MCF 10A (cell line): ENCODE measurements at regions of chr22 and their contacts with region 1.

Region 1: DNA sequence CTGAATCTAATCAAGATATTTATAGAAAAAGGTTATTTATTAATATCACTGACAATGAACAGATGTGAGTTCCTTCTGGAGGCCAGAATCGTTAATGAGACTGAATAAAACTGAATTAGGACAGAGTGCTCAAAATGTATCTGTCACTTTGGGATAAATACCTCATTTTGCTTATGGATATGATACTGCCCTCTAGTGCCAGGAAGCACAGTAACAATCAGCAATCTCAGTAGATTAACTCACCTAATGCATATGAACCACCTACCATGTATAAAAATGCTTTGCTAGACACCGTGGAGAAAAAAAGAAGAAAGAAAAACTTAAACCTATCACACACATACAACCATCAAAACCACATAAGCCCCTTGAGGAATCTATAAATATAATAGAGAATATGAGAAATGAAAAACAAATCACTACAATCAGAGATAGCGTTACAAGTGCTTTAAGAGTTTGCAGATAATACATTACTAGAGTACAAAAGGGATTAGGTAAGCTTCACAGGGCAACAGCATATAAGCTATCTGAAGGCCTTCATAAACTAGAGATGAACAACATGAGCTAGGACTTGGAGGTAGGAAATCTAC is 117.4 kb downstream of the SGSM3 start:
- DNase-seq: peak; percentile 54
- H3K4me3 Mint-ChIP-seq: no peak overlapping the region
- H3K27ac Mint-ChIP-seq: peak overlapping the region; percentile 94
- H3K4me1 Mint-ChIP-seq: peaks cover 39% of the 10 kb centered on the region
- H3K27me3 Mint-ChIP-seq: no peaks in the 10 kb centered on the region
- CTCF ChIP-seq: peak; percentile 55

Region 2: GRCh38 chr22:40326905-40327735 is 160.6 kb before region 1 on chr22:
- CTCF ChIA-PET with region 1: no interaction called
- POLR2A ChIA-PET with region 1: no interaction called
- intact Hi-C with region 1: no loop called
- DNase-seq: no peak
- H3K4me3 Mint-ChIP-seq: no peak overlapping the region
- H3K27ac Mint-ChIP-seq: no peak overlapping the region
- H3K4me1 Mint-ChIP-seq: no peaks in the 10 kb centered on the region
- H3K27me3 Mint-ChIP-seq: no peaks in the 10 kb centered on the region
- CTCF ChIP-seq: no peak

Region 3: GRCh38 chr22:40443732-40444131 is 44.0 kb before region 1 on chr22:
- CTCF ChIA-PET with region 1: interaction called, 32 read pairs
- POLR2A ChIA-PET with region 1: interaction called, 48 read pairs
- intact Hi-C with region 1: no loop called
- DNase-seq: no peak
- H3K4me3 Mint-ChIP-seq: no peak overlapping the region
- H3K27ac Mint-ChIP-seq: peak overlapping the region; percentile 23
- H3K4me1 Mint-ChIP-seq: peaks cover 21% of the 10 kb centered on the region
- H3K27me3 Mint-ChIP-seq: no peaks in the 10 kb centered on the region
- CTCF ChIP-seq: no peak

Region 4: GRCh38 chr22:40449676-40450035 is 38.1 kb before region 1 on chr22:
- CTCF ChIA-PET with region 1: interaction called, 23 read pairs
- POLR2A ChIA-PET with region 1: interaction called, 27 read pairs
- intact Hi-C with region 1: no loop called
- DNase-seq: peak; percentile 78
- H3K4me3 Mint-ChIP-seq: no peak overlapping the region
- H3K27ac Mint-ChIP-seq: peak overlapping the region; percentile 63
- H3K4me1 Mint-ChIP-seq: peaks cover 31% of the 10 kb centered on the region
- H3K27me3 Mint-ChIP-seq: no peaks in the 10 kb centered on the region
- CTCF ChIP-seq: no peak

Region 5: DNA sequence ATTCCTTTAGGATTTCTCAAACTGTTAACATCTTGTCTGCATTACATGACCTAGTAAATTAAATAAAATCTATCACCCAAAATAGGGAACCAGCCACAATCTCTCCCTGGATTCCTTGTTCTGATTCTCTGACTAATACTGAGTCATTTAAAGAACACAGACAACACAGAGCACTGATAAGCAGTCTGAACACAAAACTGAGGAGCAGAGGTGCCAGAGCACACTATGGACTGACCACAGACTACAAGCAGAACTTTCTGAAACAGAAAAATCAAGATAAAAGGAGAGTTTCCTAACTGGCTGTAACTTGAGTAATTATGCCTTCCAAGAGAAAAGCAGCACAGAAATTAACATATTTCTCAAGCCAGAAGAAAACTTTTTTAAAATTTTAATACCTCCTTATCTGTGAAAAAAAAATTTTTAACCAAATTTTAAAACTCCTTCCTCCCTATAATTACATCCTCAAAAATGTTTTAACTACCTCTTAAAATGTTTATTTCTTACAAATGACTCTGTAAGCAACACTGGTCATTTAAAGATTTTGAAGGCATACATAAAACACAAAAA is 11.5 kb after region 1 on chr22:
- CTCF ChIA-PET with region 1: interaction called, 7 read pairs
- POLR2A ChIA-PET with region 1: interaction called, 79 read pairs
- intact Hi-C with region 1: no loop called
- DNase-seq: peak; percentile 90
- H3K4me3 Mint-ChIP-seq: peak overlapping the region; percentile 25
- H3K27ac Mint-ChIP-seq: peak overlapping the region; percentile 78
- H3K4me1 Mint-ChIP-seq: peaks cover 29% of the 10 kb centered on the region
- H3K27me3 Mint-ChIP-seq: no peaks in the 10 kb centered on the region
- CTCF ChIP-seq: no peak

Region 6: DNA sequence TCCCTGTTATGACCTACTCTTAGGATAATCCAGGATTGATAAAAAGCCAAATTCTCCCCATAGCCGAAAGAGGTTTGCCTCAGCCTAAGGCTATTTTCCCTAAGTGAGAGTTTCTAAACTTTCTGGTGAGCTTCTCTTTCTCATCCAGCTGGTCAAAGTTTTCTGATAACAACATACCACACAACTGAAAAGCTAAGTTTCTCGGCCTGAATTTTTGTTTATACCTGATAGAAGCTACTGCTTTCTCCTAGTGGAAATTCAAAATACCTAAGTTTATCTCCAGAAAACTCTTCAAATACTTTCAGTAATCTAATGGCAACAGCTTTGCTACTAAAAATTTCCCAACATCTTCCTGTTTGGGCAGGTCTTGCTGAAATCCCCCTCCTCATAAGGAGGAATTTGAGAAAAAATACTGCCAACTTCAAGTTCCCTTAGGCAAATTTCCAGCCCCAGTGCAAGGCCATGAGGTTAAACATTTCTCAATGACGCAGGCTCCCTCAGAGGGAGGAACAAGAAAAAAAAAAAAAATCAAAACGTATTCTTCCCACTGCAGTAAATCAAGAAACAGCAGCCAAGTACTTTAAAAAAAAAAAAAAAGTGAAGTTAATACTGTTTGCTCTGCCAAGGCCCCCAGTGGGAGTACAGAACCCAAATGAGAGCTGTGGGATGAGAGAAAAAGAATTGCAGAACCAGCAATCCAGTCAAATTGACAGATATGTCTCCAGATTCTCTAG is 21.8 kb after region 1 on chr22:
- CTCF ChIA-PET with region 1: interaction called, 6 read pairs
- POLR2A ChIA-PET with region 1: interaction called, 18 read pairs
- intact Hi-C with region 1: no loop called
- DNase-seq: peak; percentile 97
- H3K4me3 Mint-ChIP-seq: peak overlapping the region; percentile 31
- H3K27ac Mint-ChIP-seq: peak overlapping the region; percentile 85
- H3K4me1 Mint-ChIP-seq: peaks cover 44% of the 10 kb centered on the region
- H3K27me3 Mint-ChIP-seq: no peaks in the 10 kb centered on the region
- CTCF ChIP-seq: no peak

Region 7: GRCh38 chr22:40645579-40646197 is 157.9 kb after region 1 on chr22:
- CTCF ChIA-PET with region 1: interaction called, 34 read pairs
- POLR2A ChIA-PET with region 1: interaction called, 28 read pairs
- intact Hi-C with region 1: no loop called
- DNase-seq: no peak
- H3K4me3 Mint-ChIP-seq: no peak overlapping the region
- H3K27ac Mint-ChIP-seq: peak overlapping the region; percentile 54
- H3K4me1 Mint-ChIP-seq: peaks cover 13% of the 10 kb centered on the region
- H3K27me3 Mint-ChIP-seq: no peaks in the 10 kb centered on the region
- CTCF ChIP-seq: no peak